Psoas muscle (tissue), 8 donors: ENCODE measurements at regions of chr2 and their contacts with region 1.

Region 1: DNA sequence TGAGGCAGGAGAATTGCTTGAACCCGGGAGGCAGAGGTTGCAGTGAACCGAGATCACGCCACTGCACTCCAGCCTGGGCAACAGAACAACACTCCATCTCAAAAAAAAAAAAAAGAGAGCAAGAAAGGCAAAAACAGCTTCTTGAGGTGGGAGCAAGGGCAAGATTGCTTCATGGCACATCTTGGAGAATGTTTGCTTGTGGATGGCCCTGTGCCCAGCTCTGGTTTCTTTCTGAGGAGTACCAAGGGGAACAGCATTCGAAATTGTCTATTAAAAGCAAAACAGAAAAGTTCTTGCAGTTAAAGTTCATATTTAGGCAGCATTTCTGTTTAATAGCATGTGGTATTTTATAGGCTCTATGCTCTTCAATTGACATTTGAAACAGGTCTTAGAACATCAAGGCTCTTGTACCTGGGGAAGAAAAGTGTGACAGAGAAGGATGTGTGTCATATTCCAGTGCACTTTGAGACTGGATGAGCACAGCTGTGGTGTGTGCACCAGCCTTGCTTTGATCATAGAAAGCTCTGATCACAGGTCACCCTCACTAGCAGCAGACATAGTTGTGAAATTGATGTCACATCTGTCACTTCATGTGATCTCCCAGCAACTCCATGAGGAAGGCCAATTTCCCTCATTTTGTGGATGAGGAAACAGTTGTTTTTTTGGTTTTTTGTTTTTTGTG is 154.3 kb downstream of the UXS1 start:
- DNase-seq: no peak
- ATAC-seq: no peak
- H3K4me3 ChIP-seq: no peak overlapping the region
- H3K27ac ChIP-seq: no peak overlapping the region
- H3K4me1 ChIP-seq: peaks cover 5% of the 10 kb centered on the region
- H3K27me3 ChIP-seq: no peaks in the 10 kb centered on the region
- CTCF ChIP-seq: no peak

Region 2: DNA sequence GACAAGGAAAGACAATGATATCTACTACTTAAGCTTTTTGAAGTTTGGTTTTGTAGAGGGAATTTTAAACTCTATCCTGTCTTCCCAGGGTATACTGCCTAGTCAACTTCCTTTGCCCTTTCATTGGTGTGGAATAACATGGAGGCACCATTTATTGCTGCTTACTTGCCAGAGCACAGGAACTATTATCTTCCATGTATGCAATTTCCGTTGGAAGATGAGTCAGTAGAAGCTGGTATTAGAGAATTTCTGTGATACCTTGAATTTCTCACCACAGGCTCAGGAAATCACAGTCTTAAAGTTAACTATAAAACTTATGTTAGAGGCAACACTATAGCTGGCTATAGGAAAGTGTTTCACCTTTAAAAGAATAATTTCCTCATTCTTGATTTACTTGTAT is 1746.0 kb after region 1 on chr2:
- intact Hi-C with region 1: loop called in 1 of 2 experiments (anchors 5 kb)
- DNase-seq: no peak
- ATAC-seq: no peak
- H3K4me3 ChIP-seq: no peak overlapping the region
- H3K27ac ChIP-seq: no peak overlapping the region
- H3K4me1 ChIP-seq: no peaks in the 10 kb centered on the region
- H3K27me3 ChIP-seq: no peaks in the 10 kb centered on the region
- CTCF ChIP-seq: no peak